ENCODE measurements at regions of chr2 and their contacts with region 1.

Region 1: GRCh38 chr2:180254872-180255271 is 247.8 kb upstream of the CWC22 start:
- DNase-seq: no peak
- H3K4me3 ChIP-seq: no peak overlapping the region
- H3K27ac ChIP-seq: no peak overlapping the region
- H3K4me1 ChIP-seq: no peaks in the 10 kb centered on the region; a peak in 1 of 7 replicates
- H3K27me3 ChIP-seq: no peaks in the 10 kb centered on the region
- CTCF ChIP-seq: no peak
- EP300 ChIP-seq: no peak
- POLR2A ChIP-seq: no peak
- RAD21 ChIP-seq: no peak

Region 2: GRCh38 chr2:180240774-180241173 is 14.1 kb before region 1 on chr2:
- CTCF ChIA-PET with region 1: interaction called, 12 read pairs
- POLR2A ChIA-PET with region 1: no interaction called
- DNase-seq: no peak
- H3K4me3 ChIP-seq: no peak overlapping the region
- H3K27ac ChIP-seq: no peak overlapping the region
- H3K4me1 ChIP-seq: no peaks in the 10 kb centered on the region
- H3K27me3 ChIP-seq: no peaks in the 10 kb centered on the region
- CTCF ChIP-seq: peak in 2 of 3 experiments; percentile 14 to 16; a peak in 2 of 4 replicates
- EP300 ChIP-seq: no peak
- POLR2A ChIP-seq: no peak
- RAD21 ChIP-seq: peak; percentile 59 to 60